Colonic mucosa (tissue), 4 donors: ENCODE measurements at regions of chr9 and their contacts with region 1.

Region 1: GRCh38 chr9:86434039-86434726 is 80.0 kb upstream of the TUT7 start:
- DNase-seq: no peak
- H3K4me3 ChIP-seq: no peak overlapping the region
- H3K27ac ChIP-seq: no peak overlapping the region
- H3K4me1 ChIP-seq: no peaks in the 10 kb centered on the region
- H3K27me3 ChIP-seq: no peaks in the 10 kb centered on the region
- CTCF ChIP-seq: peak; percentile 66

Region 2: GRCh38 chr9:86413966-86414880 is 20.0 kb before region 1 on chr9:
- intact Hi-C with region 1: no loop called
- DNase-seq: no peak
- H3K4me3 ChIP-seq: no peak overlapping the region
- H3K27ac ChIP-seq: no peak overlapping the region
- H3K4me1 ChIP-seq: no peaks in the 10 kb centered on the region
- H3K27me3 ChIP-seq: no peaks in the 10 kb centered on the region
- CTCF ChIP-seq: peak; percentile 73

Region 3: DNA sequence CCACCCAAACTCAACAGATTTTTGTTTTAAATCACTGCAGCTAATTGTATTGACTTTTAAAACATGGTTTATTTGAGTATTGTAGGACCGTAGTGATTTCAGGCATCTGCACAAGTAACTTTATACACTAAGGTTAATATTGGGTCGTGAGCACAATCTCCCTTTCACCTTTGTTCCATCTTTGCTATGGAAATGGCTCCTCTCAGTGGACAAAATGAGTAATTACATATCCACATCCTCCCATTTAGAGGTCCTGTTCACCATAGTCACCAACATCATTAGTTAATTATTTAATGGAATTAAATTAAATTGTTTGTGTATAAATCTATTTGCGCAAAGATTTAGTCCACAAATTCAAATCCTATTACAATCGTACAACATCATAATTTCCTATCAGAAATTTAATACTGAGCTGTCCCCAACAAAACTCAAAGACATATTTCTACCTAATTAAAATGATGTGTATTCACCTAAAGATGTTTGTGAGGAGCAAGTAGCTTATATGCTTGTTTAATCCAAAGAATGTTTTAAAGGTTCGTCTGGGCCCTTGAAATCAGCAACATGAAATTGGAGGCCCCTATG is 890.5 kb after region 1 on chr9:
- intact Hi-C with region 1: loop called (anchors 5 kb)
- DNase-seq: no peak
- H3K4me3 ChIP-seq: no peak overlapping the region
- H3K27ac ChIP-seq: no peak overlapping the region
- H3K4me1 ChIP-seq: no peaks in the 10 kb centered on the region
- H3K27me3 ChIP-seq: no peaks in the 10 kb centered on the region
- CTCF ChIP-seq: peak; percentile 71

Region 4: DNA sequence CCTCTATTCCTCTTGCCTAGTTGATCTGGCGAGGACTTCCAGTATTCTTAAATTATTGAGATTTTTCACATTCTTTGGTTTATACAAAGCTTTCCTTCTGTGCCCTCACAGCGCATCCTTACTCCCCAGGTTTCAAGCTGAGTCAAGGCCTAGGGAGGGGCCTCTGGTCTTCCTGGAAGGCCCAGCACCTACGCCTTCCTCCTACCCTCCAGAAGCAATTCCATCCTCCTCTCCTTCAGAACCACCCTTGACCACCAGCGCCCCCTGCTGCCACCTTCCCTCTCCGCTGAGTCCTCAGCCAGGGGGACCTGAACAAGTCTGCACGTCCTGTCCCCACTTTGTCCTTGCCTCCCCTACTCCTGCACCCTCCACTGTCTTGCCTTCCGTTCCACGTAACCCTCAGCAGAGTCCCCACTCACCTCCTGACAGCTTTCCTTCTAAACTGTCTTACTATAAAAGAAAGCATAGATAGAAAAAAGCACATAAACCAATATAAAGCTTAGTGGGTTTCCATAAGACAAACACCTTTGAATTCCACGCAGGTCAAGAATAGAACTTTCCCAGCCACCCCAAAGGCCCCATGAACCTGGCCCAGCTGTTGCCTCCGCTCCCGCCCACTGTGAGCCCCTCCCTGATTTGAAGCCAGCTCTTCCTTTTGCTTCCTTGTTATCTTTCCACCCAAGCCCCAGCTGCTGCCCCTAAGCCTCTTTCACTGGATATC is 1228.8 kb after region 1 on chr9:
- intact Hi-C with region 1: loop called (anchors 10 kb)
- DNase-seq: peak; percentile 90
- H3K4me3 ChIP-seq: no peak overlapping the region
- H3K27ac ChIP-seq: no peak overlapping the region
- H3K4me1 ChIP-seq: no peaks in the 10 kb centered on the region
- H3K27me3 ChIP-seq: no peaks in the 10 kb centered on the region
- CTCF ChIP-seq: peak; percentile 83